ENCODE measurements at regions of chr11 and their contacts with region 1.

Region 1: GRCh38 chr11:120335908-120336640 is at the start of gene ARHGEF12:
- DNase-seq: peak; percentile 33
- ATAC-seq: peak; percentile 64
- H3K4me3 ChIP-seq: peak within 1 kb of the TSS; percentile 94
- H3K27ac ChIP-seq: peak within 1 kb of the TSS; percentile 74
- H3K4me1 ChIP-seq: peaks cover 9% of the 10 kb centered on the region
- H3K27me3 ChIP-seq: no peaks in the 10 kb centered on the region
- CTCF ChIP-seq: peak; percentile 40 to 48 (median 44)
- EP300 ChIP-seq: peak in 1 of 2 experiments; percentile 43; a peak in 1 of 4 replicates
- POLR2A ChIP-seq: peak; percentile 67
- RAD21 ChIP-seq: peak; percentile 23; the same call in 1 of the 2 replicates
- polyA plus RNA-seq, gene ARHGEF12: 2.7 to 3.6 TPM

Region 2: DNA sequence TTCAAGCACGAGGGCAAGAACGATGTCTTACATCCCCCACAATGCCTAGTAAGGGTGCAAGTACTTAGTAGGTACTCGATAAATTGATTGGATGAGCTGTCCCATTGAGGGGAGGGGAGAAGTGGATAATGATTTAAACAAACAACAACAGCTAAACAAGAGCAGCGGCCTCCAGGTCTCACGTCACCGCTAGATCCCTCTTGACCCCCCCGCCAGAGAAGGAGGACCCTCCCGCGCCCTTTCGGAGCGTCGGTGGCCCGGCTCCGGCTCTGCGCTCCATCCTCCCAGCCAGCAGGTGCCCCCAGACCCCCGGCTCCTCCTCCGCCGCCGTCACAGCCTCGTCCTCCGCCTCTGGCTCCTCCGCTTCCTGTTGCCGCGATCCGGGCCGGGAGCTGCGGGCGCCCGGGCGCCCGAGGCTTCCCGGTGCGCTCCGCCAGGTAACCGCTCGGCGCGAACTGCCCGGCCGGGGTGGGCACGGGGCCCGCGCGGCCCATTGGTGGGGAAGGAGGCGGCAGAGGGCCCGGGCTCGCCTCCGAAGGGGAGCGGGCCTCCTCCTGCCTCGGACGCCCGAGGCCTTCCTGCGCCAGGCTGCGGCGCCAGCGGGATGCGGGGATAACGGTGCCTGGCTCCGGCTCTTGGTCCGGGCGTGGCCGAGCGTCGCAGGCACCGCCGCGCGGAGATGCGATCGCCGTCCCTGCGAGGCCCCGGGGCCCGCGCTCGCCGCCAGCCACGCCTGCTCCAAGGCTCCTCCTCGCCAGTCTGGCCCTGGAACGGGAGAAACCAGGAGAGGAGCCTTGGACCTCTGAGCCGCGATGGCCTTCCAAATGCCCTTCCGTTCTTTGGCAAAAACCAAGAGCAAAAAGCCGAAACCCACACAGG is 10.9 kb before region 1 on chr11 and contains the start of gene TLCD5:
- CTCF ChIA-PET with region 1: interaction called, 11 read pairs
- POLR2A ChIA-PET with region 1: interaction called, 8 read pairs
- RAD21 ChIA-PET with region 1: interaction called, 5 read pairs
- SMC1A ChIA-PET with region 1: interaction called, 12 read pairs
- in situ Hi-C with region 1: no loop called
- intact Hi-C with region 1: no loop called
- DNase-seq: no peak
- ATAC-seq: peak; percentile 87
- H3K4me3 ChIP-seq: peak within 1 kb of the TSS; percentile 72
- H3K27ac ChIP-seq: peak within 1 kb of the TSS; percentile 35
- H3K4me1 ChIP-seq: no peaks in the 10 kb centered on the region
- H3K27me3 ChIP-seq: no peaks in the 10 kb centered on the region; a peak in 2 of 4 replicates
- CTCF ChIP-seq: peak in 2 of 3 experiments; percentile 15 to 35; a peak in 3 of 6 replicates
- EP300 ChIP-seq: no peak
- POLR2A ChIP-seq: no peak
- RAD21 ChIP-seq: no peak
- polyA plus RNA-seq, gene TLCD5: 2.4 to 3.1 TPM

Region 3: GRCh38 chr11:120424185-120424969 is 88.3 kb after region 1 on chr11:
- CTCF ChIA-PET with region 1: interaction called, 14 read pairs
- POLR2A ChIA-PET with region 1: interaction called, 4 read pairs
- RAD21 ChIA-PET with region 1: interaction called, 9 read pairs
- SMC1A ChIA-PET with region 1: interaction called, 7 read pairs
- in situ Hi-C with region 1: no loop called
- intact Hi-C with region 1: no loop called
- DNase-seq: no peak
- ATAC-seq: peak; percentile 17; the same call in 1 of the 3 replicates
- H3K4me3 ChIP-seq: no peak overlapping the region
- H3K27ac ChIP-seq: no peak overlapping the region
- H3K4me1 ChIP-seq: peaks cover 3% of the 10 kb centered on the region; the same call in 1 of the 2 replicates
- H3K27me3 ChIP-seq: no peaks in the 10 kb centered on the region
- CTCF ChIP-seq: no peak
- EP300 ChIP-seq: no peak
- POLR2A ChIP-seq: no peak
- RAD21 ChIP-seq: no peak

Region 4: GRCh38 chr11:120462825-120463224 is 126.8 kb after region 1 on chr11:
- CTCF ChIA-PET with region 1: interaction called, 8 read pairs
- POLR2A ChIA-PET with region 1: no interaction called
- RAD21 ChIA-PET with region 1: interaction called, 3 read pairs
- SMC1A ChIA-PET with region 1: interaction called, 10 read pairs
- in situ Hi-C with region 1: no loop called
- intact Hi-C with region 1: no loop called
- DNase-seq: no peak
- ATAC-seq: no peak
- H3K4me3 ChIP-seq: no peak overlapping the region
- H3K27ac ChIP-seq: no peak overlapping the region
- H3K4me1 ChIP-seq: no peaks in the 10 kb centered on the region
- H3K27me3 ChIP-seq: no peaks in the 10 kb centered on the region
- CTCF ChIP-seq: no peak
- EP300 ChIP-seq: no peak
- POLR2A ChIP-seq: no peak
- RAD21 ChIP-seq: no peak

Region 5: DNA sequence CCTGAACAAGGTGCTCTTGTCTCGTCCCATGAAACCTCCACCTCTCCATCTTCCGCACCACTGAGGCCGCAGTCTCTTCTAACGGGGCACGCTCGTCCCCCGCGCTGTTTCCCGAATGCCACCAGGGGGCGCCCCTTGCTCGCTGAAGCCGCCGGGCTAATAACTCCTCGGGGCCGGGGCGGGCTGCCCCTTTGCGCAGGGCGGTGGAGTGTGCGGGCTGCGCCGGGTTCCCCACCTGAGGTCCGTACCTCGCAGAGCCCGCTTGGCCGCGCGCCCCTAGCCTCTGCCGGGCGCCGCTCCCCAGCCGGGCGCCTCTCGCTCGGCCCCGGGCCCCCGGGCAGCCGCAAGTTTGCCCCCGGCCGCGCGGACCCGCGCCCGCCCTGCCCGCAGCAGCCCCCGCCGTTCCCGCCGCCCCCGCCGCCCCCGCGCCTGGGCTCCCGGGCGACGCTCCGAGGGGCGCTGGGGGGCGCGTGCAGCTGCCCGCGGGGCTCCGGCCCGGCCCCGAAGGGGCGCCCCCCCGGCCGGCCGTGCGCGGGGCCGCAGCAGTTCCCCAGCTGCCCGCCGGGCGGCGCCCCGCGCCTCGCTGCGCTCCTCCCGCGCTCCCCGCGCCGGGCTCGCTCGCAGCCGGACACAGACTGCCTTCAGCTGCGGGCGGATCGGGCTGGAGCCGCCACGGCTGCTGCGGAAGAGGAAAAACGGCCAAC is 175.2 kb after region 1 on chr11 and contains the start of gene GRIK4:
- CTCF ChIA-PET with region 1: interaction called, 19 read pairs
- POLR2A ChIA-PET with region 1: no interaction called
- RAD21 ChIA-PET with region 1: interaction called, 8 read pairs
- SMC1A ChIA-PET with region 1: interaction called, 10 read pairs
- in situ Hi-C with region 1: no loop called
- intact Hi-C with region 1: no loop called
- DNase-seq: no peak
- ATAC-seq: peak; percentile 95
- H3K4me3 ChIP-seq: peak within 1 kb of the TSS; percentile 16; the same call in 1 of the 2 replicates
- H3K27ac ChIP-seq: no peak within 1 kb of the TSS
- H3K4me1 ChIP-seq: no peaks in the 10 kb centered on the region; the same call in 1 of the 2 replicates
- H3K27me3 ChIP-seq: no peaks in the 10 kb centered on the region
- CTCF ChIP-seq: peak; percentile 88 to 98 (median 92)
- EP300 ChIP-seq: no peak
- POLR2A ChIP-seq: no peak
- RAD21 ChIP-seq: peak; percentile 99
- polyA plus RNA-seq, gene GRIK4: 0.33 to 0.45 TPM

Region 6: DNA sequence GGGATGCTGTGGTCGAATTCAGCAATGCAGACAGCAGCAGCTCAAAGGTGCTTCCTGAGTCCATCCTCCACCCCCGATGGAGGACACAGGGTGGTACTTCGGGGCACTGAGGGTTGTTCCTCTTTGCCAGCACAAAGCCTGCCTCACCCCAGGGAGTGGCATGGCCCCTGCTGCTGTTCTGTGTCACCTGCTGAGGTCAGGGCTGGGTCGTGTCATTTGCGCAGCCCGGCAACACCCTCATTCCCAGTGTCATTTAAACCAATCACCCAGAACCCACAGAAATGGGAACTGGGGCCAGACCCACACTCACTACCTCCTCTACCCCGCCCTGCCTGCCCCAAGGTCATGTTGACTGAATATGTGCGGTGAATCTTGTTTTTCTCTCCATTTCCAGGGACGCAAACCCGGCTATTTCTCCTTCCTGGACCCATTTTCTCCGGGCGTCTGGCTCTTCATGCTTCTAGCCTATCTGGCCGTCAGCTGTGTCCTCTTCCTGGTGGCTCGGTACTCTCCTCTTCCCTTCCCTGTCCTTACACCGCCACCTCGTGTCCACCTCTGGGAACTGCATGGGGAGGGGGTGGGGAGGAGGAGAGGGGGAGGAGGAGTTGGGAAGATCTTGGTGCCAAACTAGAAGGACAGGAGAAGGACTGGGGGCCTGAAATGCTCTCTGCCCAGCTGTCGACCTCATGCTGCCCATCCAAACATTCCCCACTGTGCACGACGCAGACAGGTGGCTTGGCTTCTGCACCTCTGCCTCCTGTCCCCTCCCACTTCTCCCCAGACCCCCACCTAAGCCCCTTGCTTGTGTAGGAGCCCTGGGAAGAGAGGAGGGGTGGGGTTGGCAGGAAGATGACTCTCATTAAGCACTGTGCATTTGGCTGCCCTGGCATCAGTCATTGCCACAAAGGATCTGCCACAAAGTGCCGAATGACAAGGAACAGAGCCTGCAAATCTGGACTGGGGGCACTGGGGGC is 616.7 kb after region 1 on chr11:
- CTCF ChIA-PET with region 1: no interaction called
- POLR2A ChIA-PET with region 1: no interaction called
- RAD21 ChIA-PET with region 1: interaction called, 6 read pairs
- SMC1A ChIA-PET with region 1: no interaction called
- in situ Hi-C with region 1: loop called (anchors 10 kb)
- intact Hi-C with region 1: loop called (anchors 2 kb)
- DNase-seq: peak; percentile 26
- ATAC-seq: peak; percentile 91
- H3K4me3 ChIP-seq: no peak overlapping the region
- H3K27ac ChIP-seq: no peak overlapping the region
- H3K4me1 ChIP-seq: peaks cover 8% of the 10 kb centered on the region
- H3K27me3 ChIP-seq: no peaks in the 10 kb centered on the region; a peak in 1 of 4 replicates
- CTCF ChIP-seq: peak; percentile 80 to 96 (median 83)
- EP300 ChIP-seq: no peak
- POLR2A ChIP-seq: no peak
- RAD21 ChIP-seq: peak; percentile 97

Measured in GM12878 (cell line).